HEK293 (cell line): ENCODE measurements at regions of chr10 and their contacts with region 1.

Region 1: DNA sequence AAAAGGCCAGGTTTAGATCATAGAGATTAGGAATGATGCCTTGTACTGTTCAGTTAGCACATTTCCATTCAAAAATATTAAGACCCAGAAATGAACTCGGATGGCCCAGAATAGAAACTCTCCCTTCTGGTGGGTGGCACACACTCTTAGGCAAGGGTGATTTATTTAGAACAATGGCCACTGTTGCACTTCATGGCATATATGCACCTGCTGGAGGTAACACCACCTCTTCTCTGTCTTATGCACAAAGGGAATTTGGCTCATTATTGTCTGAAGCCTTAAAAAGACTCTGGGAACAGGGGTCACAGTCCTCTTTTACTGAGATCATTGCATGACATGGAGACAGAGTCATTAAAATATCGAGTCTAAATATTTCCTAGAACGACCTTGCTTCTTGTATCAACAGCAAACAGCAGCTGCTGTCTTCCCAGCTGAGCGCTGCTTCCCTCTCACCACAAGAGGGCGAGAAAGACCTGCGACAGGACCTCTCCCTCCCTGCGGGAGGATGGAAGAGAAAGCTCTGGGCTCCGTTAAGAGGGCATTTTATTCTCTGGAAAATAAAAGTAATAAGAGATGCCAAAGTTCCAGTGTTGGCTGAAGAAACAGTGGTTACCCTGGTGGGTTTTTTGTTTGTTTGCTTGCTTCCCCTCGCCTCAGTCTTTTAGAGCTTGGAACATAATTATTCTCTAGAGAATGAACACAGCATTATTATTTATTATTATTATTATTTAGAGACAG is 13.6 kb upstream of the BAMBI start:
- H3K4me3 ChIP-seq: no peak overlapping the region
- H3K27ac ChIP-seq: no peak overlapping the region
- H3K4me1 ChIP-seq: 0 out of 2 replicates have a peak, but pooled peaks cover 6% of the 10 kb centered on the region
- CTCF ChIP-seq: peak; percentile 84

Region 2: GRCh38 chr10:28036587-28036986 is 627.2 kb before region 1 on chr10:
- CTCF ChIA-PET with region 1: no interaction called
- POLR2A ChIA-PET with region 1: no interaction called
- H3K4me3 ChIP-seq: no peak overlapping the region
- H3K27ac ChIP-seq: no peak overlapping the region
- H3K4me1 ChIP-seq: no peaks in the 10 kb centered on the region
- CTCF ChIP-seq: no peak

Region 3: GRCh38 chr10:28503114-28503513 is 160.6 kb before region 1 on chr10:
- CTCF ChIA-PET with region 1: no interaction called
- POLR2A ChIA-PET with region 1: no interaction called
- H3K4me3 ChIP-seq: no peak overlapping the region
- H3K27ac ChIP-seq: no peak overlapping the region
- H3K4me1 ChIP-seq: peaks cover 9% of the 10 kb centered on the region
- CTCF ChIP-seq: no peak

Region 4: DNA sequence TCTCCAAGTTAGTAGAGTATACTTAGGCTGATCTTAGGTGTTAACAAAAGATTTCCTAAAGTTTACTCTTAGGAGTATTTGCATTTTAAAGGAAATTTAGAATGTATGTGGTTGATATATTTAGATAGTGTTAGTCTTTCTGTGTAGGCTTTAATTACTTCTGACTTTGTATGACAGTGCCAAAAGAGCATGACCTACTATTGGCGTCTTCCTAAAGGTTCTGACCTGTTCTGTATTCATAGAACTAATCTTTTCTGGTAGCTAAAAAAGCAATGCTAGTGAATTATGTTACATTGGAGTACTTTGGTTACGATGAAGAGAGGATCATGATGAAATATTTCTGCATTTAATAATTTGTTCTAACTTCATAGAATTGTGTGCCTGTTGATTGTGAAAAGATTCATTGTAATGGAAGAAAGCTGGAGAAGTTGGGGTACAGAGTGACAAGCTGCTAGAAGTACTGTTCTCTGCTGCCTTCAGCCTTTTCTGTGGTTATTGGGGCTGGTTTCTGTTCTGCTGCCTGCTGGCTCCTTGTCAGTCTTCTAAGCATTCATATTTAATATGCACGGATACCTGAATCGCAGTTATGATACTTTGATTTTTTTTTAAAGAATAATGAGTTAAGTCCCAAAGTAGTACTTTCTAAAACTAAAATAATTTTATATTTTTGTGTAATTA is 117.6 kb before region 1 on chr10:
- CTCF ChIA-PET with region 1: no interaction called
- POLR2A ChIA-PET with region 1: no interaction called
- H3K4me3 ChIP-seq: no peak overlapping the region
- H3K27ac ChIP-seq: no peak overlapping the region
- H3K4me1 ChIP-seq: peaks cover 6% of the 10 kb centered on the region; the same call in 1 of the 2 replicates
- CTCF ChIP-seq: no peak

Region 5: DNA sequence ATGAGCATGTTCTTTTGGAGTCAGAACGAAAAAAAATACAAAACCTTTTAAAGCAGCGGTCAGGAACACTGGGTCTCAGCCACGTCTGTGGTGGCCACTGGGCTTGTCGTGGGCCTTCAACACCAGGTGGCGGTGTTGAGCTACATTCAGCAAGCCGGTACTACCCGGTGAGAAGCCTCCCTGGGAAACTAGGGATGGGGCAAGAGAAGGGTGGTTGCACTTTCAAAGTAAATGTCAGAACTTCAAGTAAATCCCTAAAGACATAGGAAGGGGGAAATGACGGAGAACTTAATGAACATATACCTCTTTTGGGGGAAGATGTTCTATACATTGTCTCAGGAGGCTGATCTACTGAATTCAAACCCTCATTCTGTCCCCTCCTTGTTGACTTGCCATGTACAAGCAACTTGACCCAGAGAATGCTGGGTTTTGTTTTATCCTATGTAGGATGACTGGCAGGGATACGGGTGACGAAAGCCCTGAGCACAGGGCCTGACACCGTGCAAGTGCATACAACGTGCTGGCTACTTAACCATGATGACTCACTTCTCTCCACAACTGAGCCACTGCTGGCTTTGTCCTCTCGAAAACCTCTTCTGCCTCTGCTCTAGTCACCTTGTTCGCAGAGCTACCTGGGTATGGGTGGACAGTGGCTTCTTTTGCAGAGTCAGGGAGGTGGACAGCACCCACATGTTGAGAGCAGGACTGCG is 35.4 kb before region 1 on chr10:
- CTCF ChIA-PET with region 1: interaction called, 10 read pairs
- POLR2A ChIA-PET with region 1: interaction called, 4 read pairs
- H3K4me3 ChIP-seq: no peak overlapping the region
- H3K27ac ChIP-seq: no peak overlapping the region
- H3K4me1 ChIP-seq: peaks cover 10% of the 10 kb centered on the region; the same call in 1 of the 2 replicates
- CTCF ChIP-seq: peak; percentile 66

Region 6: DNA sequence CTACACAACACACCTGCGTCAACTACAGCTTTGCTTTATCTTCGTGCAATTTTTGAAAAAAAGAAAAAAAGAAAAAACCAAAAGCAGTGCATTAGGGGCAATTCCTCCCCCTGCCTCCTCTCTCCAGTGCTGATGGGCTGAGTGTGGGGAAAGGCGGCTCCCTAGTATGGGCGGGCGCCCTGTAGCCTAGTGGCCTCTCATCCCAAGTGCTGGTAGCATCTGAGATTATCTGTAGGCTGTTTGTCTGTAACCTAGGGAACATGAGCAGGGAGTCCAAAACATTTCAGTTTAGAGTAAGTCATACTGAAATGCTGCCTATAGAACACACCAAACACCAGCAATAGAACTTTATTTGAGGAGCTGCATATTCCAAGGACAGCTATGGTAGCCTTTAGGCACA is 11.0 kb before region 1 on chr10:
- CTCF ChIA-PET with region 1: interaction called, 26 read pairs
- POLR2A ChIA-PET with region 1: no interaction called
- H3K4me3 ChIP-seq: no peak overlapping the region
- H3K27ac ChIP-seq: no peak overlapping the region
- H3K4me1 ChIP-seq: no peaks in the 10 kb centered on the region
- CTCF ChIP-seq: no peak

Region 7: DNA sequence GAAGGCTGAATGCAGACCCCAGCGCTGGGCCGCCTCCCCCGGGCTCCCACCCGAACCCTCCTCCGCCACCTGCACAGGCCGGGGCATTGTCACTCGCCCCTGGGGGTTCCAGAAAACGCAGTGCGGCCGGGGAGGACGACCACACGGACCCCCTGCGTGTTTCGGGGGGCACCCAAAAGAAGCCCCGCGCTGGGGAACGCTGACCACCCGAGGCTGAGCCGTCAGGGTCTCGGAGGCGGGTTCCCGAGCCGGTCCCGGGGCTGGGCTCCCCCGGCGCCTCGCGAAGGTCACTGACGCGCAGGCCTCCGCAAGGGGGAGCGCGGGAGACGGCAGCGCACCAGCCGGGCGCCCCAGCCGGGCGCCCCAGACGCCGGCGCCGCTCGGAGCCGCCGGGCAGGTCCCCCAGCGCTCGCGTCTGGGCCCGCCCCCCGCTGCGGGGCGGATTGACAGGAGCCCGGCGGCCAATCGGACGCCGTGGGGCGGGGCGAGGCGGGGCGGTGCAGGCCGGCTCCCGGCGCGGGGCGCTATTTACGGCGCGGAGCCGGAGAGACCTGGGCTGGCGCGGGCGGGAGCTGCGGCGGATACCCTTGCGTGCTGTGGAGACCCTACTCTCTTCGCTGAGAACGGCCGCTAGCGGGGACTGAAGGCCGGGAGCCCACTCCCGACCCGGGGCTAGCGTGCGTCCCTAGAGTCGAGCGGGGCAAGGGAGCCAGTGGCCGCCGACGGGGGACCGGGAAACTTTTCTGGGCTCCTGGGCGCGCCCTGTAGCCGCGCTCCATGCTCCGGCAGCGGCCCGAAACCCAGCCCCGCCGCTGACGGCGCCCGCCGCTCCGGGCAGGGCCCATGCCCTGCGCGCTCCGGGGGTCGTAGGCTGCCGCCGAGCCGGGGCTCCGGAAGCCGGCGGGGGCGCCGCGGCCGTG is 13.5 kb after region 1 on chr10 and contains the start of gene BAMBI:
- CTCF ChIA-PET with region 1: interaction called, 10 read pairs
- POLR2A ChIA-PET with region 1: interaction called, 11 read pairs
- H3K4me3 ChIP-seq: peak within 1 kb of the TSS; percentile 82
- H3K27ac ChIP-seq: peak within 1 kb of the TSS; percentile 92
- H3K4me1 ChIP-seq: peaks cover 3% of the 10 kb centered on the region; the same call in 1 of the 2 replicates
- CTCF ChIP-seq: peak; percentile 60; the same call in 1 of the 2 replicates

Region 8: GRCh38 chr10:28991326-28992270 is 327.9 kb after region 1 on chr10:
- CTCF ChIA-PET with region 1: interaction called, 43 read pairs
- POLR2A ChIA-PET with region 1: no interaction called
- H3K4me3 ChIP-seq: no peak overlapping the region
- H3K27ac ChIP-seq: no peak overlapping the region
- H3K4me1 ChIP-seq: no peaks in the 10 kb centered on the region
- CTCF ChIP-seq: no peak; the same call in 1 of the 2 replicates

Region 9: DNA sequence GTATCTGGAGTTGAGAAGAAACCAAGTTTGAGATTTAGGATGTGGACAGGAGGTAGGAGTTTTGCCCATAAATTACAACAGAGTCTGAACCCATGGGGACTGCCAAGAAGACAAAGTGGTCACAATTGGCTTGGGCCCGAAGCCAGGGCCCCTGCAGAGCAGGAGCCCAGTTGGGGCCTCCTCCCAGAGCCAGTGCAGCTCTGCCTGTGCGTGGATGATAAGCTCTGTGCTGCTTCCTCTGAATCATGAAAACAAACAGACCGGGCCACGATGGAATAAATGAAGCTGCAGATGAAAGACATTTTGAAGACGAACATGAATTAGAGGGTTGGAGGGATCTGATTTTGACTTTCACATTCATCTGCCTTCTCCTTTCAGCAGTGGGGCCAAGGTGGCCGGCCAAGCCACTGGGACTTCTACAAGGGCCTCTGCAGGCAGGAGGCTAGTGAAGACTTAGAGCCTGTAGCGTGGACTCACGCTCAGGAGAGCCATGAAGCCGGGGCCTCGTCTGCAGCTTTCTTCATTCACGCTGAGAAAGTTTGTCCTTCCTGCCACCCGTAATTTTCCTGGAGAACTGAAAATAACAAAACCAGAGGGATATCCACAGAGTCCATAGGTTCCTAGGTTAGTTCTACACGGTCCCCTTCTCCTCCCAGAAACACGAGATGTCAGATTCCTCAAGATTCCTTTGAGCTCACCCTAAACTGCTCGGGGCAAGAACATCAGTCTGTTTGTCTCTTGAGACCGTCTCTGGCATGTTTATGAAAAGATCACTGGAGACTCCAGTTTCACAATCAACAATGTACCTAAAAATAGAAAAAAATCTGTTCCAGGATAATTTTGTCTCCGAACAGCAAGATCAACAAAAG is 468.4 kb after region 1 on chr10:
- CTCF ChIA-PET with region 1: interaction called, 30 read pairs
- POLR2A ChIA-PET with region 1: interaction called, 3 read pairs
- H3K4me3 ChIP-seq: no peak overlapping the region
- H3K27ac ChIP-seq: peak overlapping the region; percentile 61
- H3K4me1 ChIP-seq: peaks cover 7% of the 10 kb centered on the region; the same call in 1 of the 2 replicates
- CTCF ChIP-seq: no peak

Region 10: DNA sequence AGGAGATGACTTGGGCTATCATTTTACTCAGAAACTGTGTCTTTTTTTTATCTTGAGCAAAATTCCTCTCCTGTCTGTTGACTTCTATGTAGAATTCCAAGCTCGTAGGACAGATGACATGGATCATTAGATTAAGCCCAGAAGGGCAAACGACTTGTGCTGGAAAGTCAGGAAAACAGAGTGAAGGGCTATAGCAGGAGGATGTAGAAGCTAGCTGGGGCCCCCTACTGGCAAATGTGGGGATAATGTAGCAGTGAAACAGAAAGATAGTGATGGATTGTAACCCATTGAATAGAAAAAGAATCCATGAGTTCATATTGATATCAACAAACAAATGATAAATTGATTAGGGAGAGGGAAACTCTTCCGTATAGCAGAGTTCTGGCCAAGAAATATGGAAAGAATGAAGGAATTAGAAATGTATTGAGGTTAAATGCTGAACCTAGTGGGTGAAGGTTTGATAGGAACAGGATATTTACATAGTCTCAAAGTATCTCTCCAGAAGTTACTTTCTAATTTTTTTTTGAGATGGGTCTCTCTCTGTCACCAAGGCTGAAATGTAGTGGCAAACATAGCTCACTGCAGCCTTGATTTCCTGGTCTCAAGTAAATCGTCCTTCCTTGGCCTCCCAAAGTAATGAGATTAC is 728.8 kb after region 1 on chr10:
- CTCF ChIA-PET with region 1: interaction called, 10 read pairs
- POLR2A ChIA-PET with region 1: no interaction called
- H3K4me3 ChIP-seq: no peak overlapping the region
- H3K27ac ChIP-seq: no peak overlapping the region
- H3K4me1 ChIP-seq: no peaks in the 10 kb centered on the region
- CTCF ChIP-seq: no peak; the same call in 1 of the 2 replicates